ENCODE measurements at regions of chr5 and their contacts with region 1.

Region 1: DNA sequence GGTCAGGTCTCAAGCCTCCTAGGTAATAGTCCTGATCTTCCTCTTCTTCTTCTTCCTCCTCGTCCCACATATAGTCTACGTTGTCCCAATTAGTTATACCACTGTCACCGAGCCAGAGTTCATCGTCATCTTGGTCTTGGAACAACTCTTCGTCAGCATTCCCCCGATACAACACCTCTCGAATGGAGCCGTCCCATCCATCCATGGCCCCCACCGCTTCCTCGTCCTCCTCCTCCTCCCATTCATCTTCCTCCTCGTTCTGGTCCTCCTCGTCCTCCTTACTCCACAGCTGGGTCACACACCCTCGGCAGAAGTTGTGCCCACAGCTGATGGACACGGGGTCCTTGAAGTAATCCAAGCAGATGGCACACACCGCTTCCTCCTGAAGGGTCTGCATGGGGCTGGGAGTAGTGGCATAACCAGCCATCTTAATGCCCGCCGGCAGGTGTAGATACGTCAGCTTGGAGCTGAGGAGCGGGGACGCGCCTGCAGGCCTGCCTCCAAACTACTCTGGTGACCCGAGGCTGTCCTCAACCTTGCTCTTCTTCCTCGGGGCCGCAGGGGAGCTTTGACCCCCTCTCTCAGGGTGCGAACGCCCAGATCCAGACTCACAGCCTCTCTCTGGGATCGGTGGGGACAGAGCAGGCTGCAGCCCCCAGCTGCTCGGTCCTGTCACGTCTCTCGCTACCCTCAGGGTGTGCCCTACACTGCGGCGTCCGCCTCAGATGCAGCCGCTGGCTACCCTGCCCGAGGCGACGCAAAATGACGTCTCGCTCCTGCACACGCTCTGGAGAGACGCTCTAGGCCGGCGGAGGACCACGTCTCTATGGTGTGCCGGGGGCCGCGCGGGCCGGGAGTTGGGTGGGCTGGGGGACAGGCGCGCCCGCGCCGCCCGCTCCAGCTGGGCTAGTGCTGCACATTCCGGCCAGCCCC is at the start of gene TRIM52:
- DNase-seq: peak; percentile 92
- H3K4me3 Mint-ChIP-seq: peak within 1 kb of the TSS; percentile 94
- H3K27ac Mint-ChIP-seq: peak within 1 kb of the TSS; percentile 89
- H3K4me1 Mint-ChIP-seq: peaks cover 43% of the 10 kb centered on the region
- H3K27me3 Mint-ChIP-seq: no peaks in the 10 kb centered on the region
- total RNA-seq, gene TRIM52: 24.0 to 24.2 TPM

Region 2: GRCh38 chr5:180802325-180803180 is 458.1 kb before region 1 on chr5 and contains the start of gene MGAT1:
- CTCF ChIA-PET with region 1: no interaction called
- POLR2A ChIA-PET with region 1: interaction called, 19 read pairs
- DNase-seq: peak; percentile 79
- H3K4me3 Mint-ChIP-seq: peak within 1 kb of the TSS; percentile 92
- H3K27ac Mint-ChIP-seq: peak within 1 kb of the TSS; percentile 97
- H3K4me1 Mint-ChIP-seq: peaks cover 82% of the 10 kb centered on the region
- H3K27me3 Mint-ChIP-seq: no peaks in the 10 kb centered on the region
- total RNA-seq, gene MGAT1: 184 to 185 TPM

Region 3: DNA sequence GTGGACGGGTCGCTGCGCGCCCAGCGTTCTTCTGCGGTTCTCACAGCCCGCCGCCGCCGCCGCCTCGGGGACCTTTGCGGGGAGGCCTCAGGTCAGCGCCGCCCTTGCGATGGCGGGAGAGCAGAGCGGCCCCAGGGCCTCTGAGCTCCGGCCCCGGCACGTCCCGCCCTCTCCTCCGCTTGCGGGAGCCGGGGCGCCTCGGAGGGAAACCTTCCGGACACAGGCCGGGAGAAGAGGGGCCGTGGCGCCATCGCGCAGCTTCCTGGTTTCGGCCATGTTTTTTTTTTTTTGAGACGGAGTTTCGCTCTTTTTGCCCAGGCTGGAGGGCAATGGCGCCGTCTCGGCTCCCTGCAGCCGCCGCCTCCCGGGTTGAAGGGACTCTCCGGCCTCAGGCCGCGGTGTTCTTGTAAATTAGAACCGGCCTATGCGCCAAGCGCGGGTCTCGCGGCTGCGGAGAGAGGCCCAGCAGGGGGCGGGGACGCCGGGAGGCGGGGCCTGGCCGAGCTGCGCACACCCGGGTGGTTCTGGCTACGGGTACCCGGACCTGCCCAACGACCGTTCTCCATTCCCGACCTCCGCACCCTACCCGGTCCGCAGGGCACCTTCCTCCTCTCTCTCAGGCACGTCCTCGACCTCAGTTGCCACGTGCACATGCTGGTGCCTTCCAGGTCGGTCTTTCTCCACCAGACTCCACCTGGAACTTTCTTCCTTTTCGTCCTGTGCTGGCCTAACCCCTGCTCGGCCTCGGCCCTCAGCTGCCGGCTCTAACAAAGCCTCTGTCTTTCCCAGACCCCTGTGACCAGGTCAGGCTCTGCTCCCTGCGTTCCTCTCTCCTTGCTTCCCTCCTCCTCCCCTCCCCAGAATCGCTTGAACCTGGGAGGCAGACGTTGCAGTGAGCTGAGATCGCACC is 429.3 kb before region 1 on chr5:
- CTCF ChIA-PET with region 1: no interaction called
- POLR2A ChIA-PET with region 1: interaction called, 22 read pairs
- DNase-seq: peak; percentile 80
- H3K4me3 Mint-ChIP-seq: peak overlapping the region; percentile 96
- H3K27ac Mint-ChIP-seq: peak overlapping the region; percentile 97
- H3K4me1 Mint-ChIP-seq: peaks cover 34% of the 10 kb centered on the region
- H3K27me3 Mint-ChIP-seq: no peaks in the 10 kb centered on the region

Region 4: GRCh38 chr5:181191529-181192394 is 68.9 kb before region 1 on chr5:
- CTCF ChIA-PET with region 1: interaction called, 6 read pairs
- POLR2A ChIA-PET with region 1: interaction called, 96 read pairs
- DNase-seq: peak; percentile 97
- H3K4me3 Mint-ChIP-seq: peak overlapping the region; percentile 94
- H3K27ac Mint-ChIP-seq: peak overlapping the region; percentile 95
- H3K4me1 Mint-ChIP-seq: peaks cover 32% of the 10 kb centered on the region
- H3K27me3 Mint-ChIP-seq: peaks cover 4% of the 10 kb centered on the region

Region 5: DNA sequence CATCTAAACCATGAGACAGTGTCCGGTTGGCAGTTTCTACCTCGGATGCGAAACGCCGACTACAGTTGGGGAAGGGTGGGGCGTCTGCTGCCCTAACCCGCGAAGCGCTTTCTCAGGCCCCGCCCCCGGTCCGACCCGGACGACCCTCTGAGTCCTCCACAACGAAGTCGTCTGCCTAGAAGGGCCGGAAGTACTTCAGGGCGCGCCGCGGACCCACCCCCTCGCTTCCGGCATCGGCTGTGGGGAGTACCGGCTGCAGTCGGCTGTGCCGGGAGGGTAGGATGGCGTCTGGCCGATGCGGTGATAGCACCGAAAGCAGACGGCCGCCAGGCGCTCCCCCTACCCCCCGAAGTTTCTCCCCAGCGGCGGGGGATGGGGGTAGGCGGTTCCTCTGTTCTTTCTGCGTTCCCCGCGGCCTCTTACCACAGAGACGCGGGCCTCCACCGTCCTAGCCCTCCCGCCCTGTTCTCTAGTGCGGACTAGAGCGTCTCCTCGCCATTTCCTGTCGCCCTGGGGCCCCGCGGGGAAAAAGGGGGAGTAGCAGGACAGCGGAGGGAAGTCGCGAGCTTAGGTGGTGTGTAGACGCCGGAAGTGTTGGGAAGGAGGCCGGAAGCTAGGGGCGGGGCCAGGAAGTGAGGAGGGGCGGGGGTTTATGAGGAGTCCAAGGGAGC is 37.5 kb before region 1 on chr5 and contains the start of gene TRIM41:
- CTCF ChIA-PET with region 1: interaction called, 3 read pairs
- POLR2A ChIA-PET with region 1: interaction called, 1,091 read pairs
- DNase-seq: peak; percentile 98
- H3K4me3 Mint-ChIP-seq: peak within 1 kb of the TSS; percentile 99
- H3K27ac Mint-ChIP-seq: peak within 1 kb of the TSS; percentile 100
- H3K4me1 Mint-ChIP-seq: peaks cover 69% of the 10 kb centered on the region
- H3K27me3 Mint-ChIP-seq: peaks cover 4% of the 10 kb centered on the region
- total RNA-seq, gene TRIM41: 42.4 to 43.7 TPM